ENCODE measurements at regions of chr19 and their contacts with region 1.

Region 1: GRCh38 chr19:13195678-13196077 is 45.5 kb downstream of the IER2 start:
- DNase-seq: peak; percentile 87
- ATAC-seq: peak; percentile 97
- H3K4me3 Mint-ChIP-seq: no peak overlapping the region
- H3K27ac Mint-ChIP-seq: no peak overlapping the region
- H3K4me1 Mint-ChIP-seq: no peaks in the 10 kb centered on the region
- H3K27me3 Mint-ChIP-seq: no peaks in the 10 kb centered on the region
- CTCF ChIP-seq: peak; percentile 71

Region 2: DNA sequence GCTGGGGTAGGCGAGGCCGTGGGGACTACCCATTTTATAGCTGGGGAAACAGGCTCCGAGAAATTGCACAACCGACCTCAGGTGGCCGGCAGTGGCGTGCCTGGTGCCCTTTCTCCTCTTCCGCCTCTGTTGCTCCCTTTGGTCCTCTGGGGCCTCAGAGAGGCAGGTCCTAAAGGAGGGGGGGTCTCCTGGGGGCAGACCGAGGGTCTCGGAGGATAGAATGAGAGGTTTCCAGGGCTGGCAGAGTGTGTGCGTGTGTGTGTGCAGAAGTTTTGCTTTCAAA is 56.8 kb before region 1 on chr19:
- CTCF ChIA-PET with region 1: no interaction called
- POLR2A ChIA-PET with region 1: no interaction called
- DNase-seq: no peak
- ATAC-seq: no peak
- H3K4me3 Mint-ChIP-seq: no peak overlapping the region
- H3K27ac Mint-ChIP-seq: no peak overlapping the region
- H3K4me1 Mint-ChIP-seq: peaks cover 8% of the 10 kb centered on the region
- H3K27me3 Mint-ChIP-seq: no peaks in the 10 kb centered on the region
- CTCF ChIP-seq: no peak

Region 3: GRCh38 chr19:13150187-13150930 is 45.3 kb before region 1 on chr19 and contains the starts of genes IER2 and STX10:
- CTCF ChIA-PET with region 1: interaction called, 31 read pairs
- POLR2A ChIA-PET with region 1: interaction called, 12 read pairs
- DNase-seq: peak; percentile 90
- ATAC-seq: peak; percentile 18
- H3K4me3 Mint-ChIP-seq: peak within 1 kb of the TSS; percentile 99
- H3K27ac Mint-ChIP-seq: peak within 1 kb of the TSS; percentile 99
- H3K4me1 Mint-ChIP-seq: peaks cover 13% of the 10 kb centered on the region
- H3K27me3 Mint-ChIP-seq: peaks cover 7% of the 10 kb centered on the region; the same call in 1 of the 2 replicates
- CTCF ChIP-seq: no peak
- total RNA-seq, gene IER2: 138 to 154 TPM (median 150 TPM) in 3 replicates
- total RNA-seq, gene STX10: 53.7 to 56.9 TPM (median 54.6 TPM) in 3 replicates

Region 4: GRCh38 chr19:13172068-13172896 is 23.4 kb before region 1 on chr19:
- CTCF ChIA-PET with region 1: interaction called, 37 read pairs
- POLR2A ChIA-PET with region 1: interaction called, 8 read pairs
- DNase-seq: no peak
- ATAC-seq: no peak
- H3K4me3 Mint-ChIP-seq: no peak overlapping the region
- H3K27ac Mint-ChIP-seq: peak overlapping the region; percentile 65; the same call in 1 of the 2 replicates
- H3K4me1 Mint-ChIP-seq: peaks cover 38% of the 10 kb centered on the region
- H3K27me3 Mint-ChIP-seq: no peaks in the 10 kb centered on the region
- CTCF ChIP-seq: no peak

Region 5: GRCh38 chr19:13212759-13213330 is 17.2 kb after region 1 on chr19:
- CTCF ChIA-PET with region 1: interaction called, 67 read pairs
- POLR2A ChIA-PET with region 1: no interaction called
- DNase-seq: peak; percentile 84
- ATAC-seq: peak; percentile 64
- H3K4me3 Mint-ChIP-seq: no peak overlapping the region
- H3K27ac Mint-ChIP-seq: no peak overlapping the region
- H3K4me1 Mint-ChIP-seq: peaks cover 17% of the 10 kb centered on the region
- H3K27me3 Mint-ChIP-seq: no peaks in the 10 kb centered on the region
- CTCF ChIP-seq: peak; percentile 80

Region 6: GRCh38 chr19:13252569-13253335 is 57.1 kb after region 1 on chr19:
- CTCF ChIA-PET with region 1: interaction called, 50 read pairs
- POLR2A ChIA-PET with region 1: no interaction called
- DNase-seq: no peak
- ATAC-seq: no peak
- H3K4me3 Mint-ChIP-seq: no peak overlapping the region
- H3K27ac Mint-ChIP-seq: no peak overlapping the region
- H3K4me1 Mint-ChIP-seq: peaks cover 6% of the 10 kb centered on the region
- H3K27me3 Mint-ChIP-seq: no peaks in the 10 kb centered on the region; the same call in 1 of the 2 replicates
- CTCF ChIP-seq: no peak

Region 7: GRCh38 chr19:13277104-13277809 is 81.6 kb after region 1 on chr19:
- CTCF ChIA-PET with region 1: interaction called, 16 read pairs
- POLR2A ChIA-PET with region 1: no interaction called
- DNase-seq: peak; percentile 48
- ATAC-seq: peak; percentile 76
- H3K4me3 Mint-ChIP-seq: no peak overlapping the region
- H3K27ac Mint-ChIP-seq: no peak overlapping the region
- H3K4me1 Mint-ChIP-seq: peaks cover 6% of the 10 kb centered on the region
- H3K27me3 Mint-ChIP-seq: no peaks in the 10 kb centered on the region
- CTCF ChIP-seq: peak; percentile 65